HepG2 (cell line): ENCODE measurements at regions of chr2 and their contacts with region 1.

Region 1: DNA sequence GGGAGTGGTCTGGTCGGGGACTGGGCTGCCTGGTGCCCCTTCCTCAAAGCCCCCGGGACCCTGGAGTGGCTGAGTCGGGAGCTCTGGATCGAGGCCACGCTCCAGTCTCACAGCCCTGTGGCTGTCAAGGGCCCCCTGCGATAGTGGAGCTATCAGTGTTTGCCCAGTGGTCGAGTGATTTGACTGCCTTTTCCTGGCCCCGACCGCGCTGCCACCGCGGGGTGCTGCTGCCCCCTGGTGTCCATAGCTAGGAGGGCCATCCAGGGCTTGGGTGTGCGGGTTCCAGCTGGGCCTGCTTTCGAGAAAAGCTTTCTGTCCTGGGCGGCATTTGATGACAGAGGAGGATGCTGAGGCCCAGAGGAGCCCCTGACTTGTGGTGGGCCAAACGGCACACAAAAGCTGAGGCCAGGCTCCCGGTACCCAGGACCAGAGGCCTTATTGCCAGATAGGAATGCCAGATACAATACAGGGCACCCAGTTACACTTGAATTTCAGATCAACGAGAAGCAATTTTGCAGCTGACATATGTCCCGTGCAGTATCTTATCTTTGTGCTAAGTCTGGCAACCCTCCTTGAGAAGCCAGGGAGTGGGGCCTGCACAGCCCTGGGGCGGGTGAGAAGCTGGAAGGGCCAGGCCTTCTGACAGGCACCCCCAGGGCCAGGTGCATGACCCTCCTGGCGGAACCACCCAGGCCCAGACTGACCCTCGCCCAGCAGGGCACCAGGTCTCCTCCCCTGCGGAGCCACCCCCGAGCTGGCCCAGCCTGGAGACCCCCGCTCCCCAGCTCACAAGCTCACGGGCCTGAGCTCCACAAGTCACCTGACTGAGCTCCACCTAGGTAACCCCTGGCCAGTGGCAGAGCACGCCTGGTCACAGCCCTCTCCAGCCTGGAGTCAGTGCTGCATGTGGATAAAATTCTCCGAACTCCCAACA is 13.0 kb downstream of the ODC1 start:
- DNase-seq: peak; percentile 80
- ATAC-seq: peak; percentile 82
- H3K4me3 ChIP-seq: peak overlapping the region in 1 of 3 experiments; percentile 28; a peak in 1 of 6 replicates
- H3K27ac ChIP-seq: no peak overlapping the region
- H3K4me1 ChIP-seq: peaks cover 57% of the 10 kb centered on the region
- H3K27me3 ChIP-seq: peaks cover 10 to 49% of the 10 kb centered on the region in 2 experiments
- CTCF ChIP-seq: peak; percentile 100
- EP300 ChIP-seq: no peak
- POLR2A ChIP-seq: no peak
- RAD21 ChIP-seq: peak; percentile 100

Region 2: DNA sequence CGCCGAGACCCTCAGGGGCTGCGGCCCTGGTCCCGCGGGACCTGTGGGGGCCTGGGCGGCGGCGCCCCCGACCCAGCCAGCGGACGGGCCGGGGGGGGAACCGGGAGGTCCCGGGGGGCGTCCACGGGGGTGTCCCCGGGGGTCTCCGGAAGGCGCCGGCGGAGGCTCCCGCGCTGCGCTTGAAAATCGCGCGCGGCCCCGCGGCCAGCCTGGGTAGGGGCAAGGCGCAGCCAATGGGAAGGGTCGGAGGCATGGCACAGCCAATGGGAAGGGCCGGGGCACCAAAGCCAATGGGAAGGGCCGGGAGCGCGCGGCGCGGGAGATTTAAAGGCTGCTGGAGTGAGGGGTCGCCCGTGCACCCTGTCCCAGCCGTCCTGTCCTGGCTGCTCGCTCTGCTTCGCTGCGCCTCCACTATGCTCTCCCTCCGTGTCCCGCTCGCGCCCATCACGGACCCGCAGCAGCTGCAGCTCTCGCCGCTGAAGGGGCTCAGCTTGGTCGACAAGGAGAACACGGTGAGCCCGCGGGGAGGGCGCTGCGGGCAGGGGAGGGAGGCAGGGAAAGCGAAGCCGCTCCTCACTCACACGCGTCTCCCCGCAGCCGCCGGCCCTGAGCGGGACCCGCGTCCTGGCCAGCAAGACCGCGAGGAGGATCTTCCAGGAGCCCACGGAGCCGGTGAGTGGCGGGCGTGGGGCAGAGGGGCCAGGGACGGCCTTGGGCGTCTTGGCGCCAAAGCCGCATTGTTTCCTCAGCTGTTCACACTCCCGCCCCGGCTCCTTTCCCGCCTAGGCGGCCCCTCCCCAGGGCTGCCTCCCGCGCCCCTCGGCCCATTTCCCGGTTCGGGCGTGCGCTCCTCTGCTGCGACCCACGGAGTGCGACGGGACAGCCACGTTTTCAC is 312.5 kb before region 1 on chr2 and contains the start of gene RRM2:
- CTCF ChIA-PET with region 1: interaction called, 30 read pairs
- POLR2A ChIA-PET with region 1: interaction called, 8 read pairs
- in situ Hi-C with region 1: loop called (anchors 5 kb)
- intact Hi-C with region 1: loop called (anchors 1 kb)
- DNase-seq: peak; percentile 95
- ATAC-seq: peak; percentile 86
- H3K4me3 ChIP-seq: peak within 1 kb of the TSS; percentile 70 to 99 (median 93)
- H3K27ac ChIP-seq: peak within 1 kb of the TSS; percentile 92
- H3K4me1 ChIP-seq: peaks cover 81% of the 10 kb centered on the region
- H3K27me3 ChIP-seq: no peaks in the 10 kb centered on the region
- CTCF ChIP-seq: peak; percentile 35
- EP300 ChIP-seq: 0 out of 4 replicates have a peak, but pooled peaks of 1 of the 2 experiments have one; percentile 40
- POLR2A ChIP-seq: peak; percentile 99 to 100
- RAD21 ChIP-seq: peak; percentile 49; the same call in 1 of the 2 replicates
- total RNA-seq, gene RRM2: 150 and 191 TPM in 2 replicates

Region 3: GRCh38 chr2:10188216-10188615 is 246.9 kb before region 1 on chr2:
- CTCF ChIA-PET with region 1: interaction called, 22 read pairs
- POLR2A ChIA-PET with region 1: no interaction called
- in situ Hi-C with region 1: no loop called
- intact Hi-C with region 1: no loop called
- DNase-seq: peak; percentile 78
- ATAC-seq: peak; percentile 89
- H3K4me3 ChIP-seq: no peak overlapping the region
- H3K27ac ChIP-seq: no peak overlapping the region
- H3K4me1 ChIP-seq: no peaks in the 10 kb centered on the region
- H3K27me3 ChIP-seq: no peaks in the 10 kb centered on the region
- CTCF ChIP-seq: peak; percentile 64
- EP300 ChIP-seq: no peak
- POLR2A ChIP-seq: no peak
- RAD21 ChIP-seq: peak; percentile 83

Region 4: DNA sequence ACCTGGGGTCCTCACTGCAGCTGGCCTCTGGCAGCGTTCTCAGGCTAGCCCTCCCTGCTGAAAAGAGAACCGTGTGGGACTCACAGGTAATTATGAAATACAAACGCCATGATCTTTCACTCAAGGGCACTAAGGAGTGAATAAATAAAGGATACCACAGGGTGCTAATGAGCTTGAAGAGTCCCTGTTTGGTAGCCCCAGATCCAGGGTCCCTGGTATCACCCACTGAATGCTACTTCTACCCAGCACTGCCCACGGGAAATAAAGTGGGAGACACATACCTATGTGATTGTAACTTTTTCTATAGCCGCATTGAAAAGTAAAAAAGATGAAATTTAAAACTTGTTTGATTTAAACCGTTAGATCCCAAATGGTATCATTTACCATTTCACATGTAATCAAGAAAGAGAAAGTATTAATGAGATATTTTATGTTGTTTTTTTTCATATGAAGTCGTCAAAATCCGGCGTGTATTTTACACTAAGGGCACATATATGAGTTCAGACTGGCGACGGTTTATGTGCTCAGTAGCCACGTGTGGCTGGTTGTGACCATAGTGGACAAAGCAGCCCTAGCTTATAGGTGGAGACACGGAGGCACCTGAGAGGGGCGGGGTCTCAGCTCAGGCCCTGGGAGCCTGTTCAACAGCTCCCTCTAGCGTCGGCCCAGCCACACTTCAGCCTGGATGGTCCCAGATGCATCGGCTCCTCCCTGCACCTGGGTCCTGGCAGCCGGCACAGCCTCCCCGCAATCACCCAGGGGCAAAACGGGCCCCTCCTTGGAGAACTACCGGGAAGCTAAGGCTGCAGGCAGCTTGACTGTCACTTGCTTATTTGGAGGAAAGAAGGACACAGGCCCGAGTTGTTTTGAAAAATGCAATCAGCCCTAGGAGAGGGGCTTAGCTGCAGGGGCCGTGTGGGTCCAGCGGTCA is 26.2 kb before region 1 on chr2:
- CTCF ChIA-PET with region 1: no interaction called
- POLR2A ChIA-PET with region 1: no interaction called
- in situ Hi-C with region 1: no loop called
- intact Hi-C with region 1: loop called (anchors 1 kb)
- DNase-seq: peak; percentile 87
- ATAC-seq: peak; percentile 89
- H3K4me3 ChIP-seq: peak overlapping the region in 1 of 3 experiments; percentile 27; a peak in 1 of 6 replicates
- H3K27ac ChIP-seq: peak overlapping the region; percentile 56
- H3K4me1 ChIP-seq: peaks cover 28% of the 10 kb centered on the region
- H3K27me3 ChIP-seq: no peaks in the 10 kb centered on the region
- CTCF ChIP-seq: peak; percentile 100
- EP300 ChIP-seq: no peak; a peak in 1 of 4 replicates
- POLR2A ChIP-seq: no peak
- RAD21 ChIP-seq: peak; percentile 100

Region 5: DNA sequence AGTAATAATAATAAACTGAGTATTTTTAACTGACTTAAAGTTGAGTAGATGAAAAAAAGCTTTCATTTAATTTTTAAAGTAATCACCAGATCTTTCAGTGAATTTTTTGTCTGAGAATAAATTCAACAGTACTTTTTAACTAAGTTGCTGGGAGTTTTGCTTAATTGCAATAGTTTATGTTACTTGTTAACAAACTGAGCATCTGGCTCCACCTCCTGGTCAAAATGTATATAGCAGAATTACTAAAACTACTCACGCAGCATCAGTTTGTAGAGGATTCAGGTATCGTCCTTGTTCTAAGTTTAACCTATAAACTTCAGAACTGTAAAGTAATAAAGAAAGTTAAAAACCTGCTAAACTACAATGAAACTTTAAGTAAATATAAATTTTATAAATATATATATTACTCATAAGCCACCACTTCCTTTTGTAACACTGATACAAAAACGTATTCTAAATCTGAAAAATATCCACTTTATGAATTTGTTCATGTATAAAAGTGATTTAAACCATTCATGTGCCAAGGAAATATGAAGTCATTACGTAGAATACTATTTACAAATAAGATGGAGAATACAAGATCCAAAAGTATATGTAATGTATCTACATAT is 233.4 kb after region 1 on chr2:
- CTCF ChIA-PET with region 1: no interaction called
- POLR2A ChIA-PET with region 1: no interaction called
- in situ Hi-C with region 1: no loop called
- intact Hi-C with region 1: loop called (anchors 2 kb)
- DNase-seq: peak; percentile 58
- ATAC-seq: peak; percentile 41; the same call in 2 of the 3 replicates
- H3K4me3 ChIP-seq: no peak overlapping the region
- H3K27ac ChIP-seq: no peak overlapping the region
- H3K4me1 ChIP-seq: no peaks in the 10 kb centered on the region
- H3K27me3 ChIP-seq: no peaks in the 10 kb centered on the region
- CTCF ChIP-seq: peak; percentile 73
- EP300 ChIP-seq: no peak
- POLR2A ChIP-seq: no peak
- RAD21 ChIP-seq: peak; percentile 18; the same call in 1 of the 2 replicates

Region 6: GRCh38 chr2:10700078-10700803 is 265.1 kb after region 1 on chr2:
- CTCF ChIA-PET with region 1: no interaction called
- POLR2A ChIA-PET with region 1: no interaction called
- in situ Hi-C with region 1: no loop called
- intact Hi-C with region 1: no loop called
- DNase-seq: no peak
- ATAC-seq: no peak
- H3K4me3 ChIP-seq: no peak overlapping the region
- H3K27ac ChIP-seq: no peak overlapping the region
- H3K4me1 ChIP-seq: peaks cover 4% of the 10 kb centered on the region; the same call in 1 of the 2 replicates
- H3K27me3 ChIP-seq: peaks cover 0 to 19% of the 10 kb centered on the region in 2 experiments; a peak in 3 of 5 replicates
- CTCF ChIP-seq: no peak
- EP300 ChIP-seq: no peak
- POLR2A ChIP-seq: no peak
- RAD21 ChIP-seq: no peak